Activated CD8-positive, alpha-beta T cell treated with anti-CD3 and anti-CD28 coated beads, Interleukin-2, amount 10 ng/mL, durations not matched to agents 7 days and 5 days (primary cell): ENCODE measurements at regions of chr20 and their contacts with region 1.

Region 1: DNA sequence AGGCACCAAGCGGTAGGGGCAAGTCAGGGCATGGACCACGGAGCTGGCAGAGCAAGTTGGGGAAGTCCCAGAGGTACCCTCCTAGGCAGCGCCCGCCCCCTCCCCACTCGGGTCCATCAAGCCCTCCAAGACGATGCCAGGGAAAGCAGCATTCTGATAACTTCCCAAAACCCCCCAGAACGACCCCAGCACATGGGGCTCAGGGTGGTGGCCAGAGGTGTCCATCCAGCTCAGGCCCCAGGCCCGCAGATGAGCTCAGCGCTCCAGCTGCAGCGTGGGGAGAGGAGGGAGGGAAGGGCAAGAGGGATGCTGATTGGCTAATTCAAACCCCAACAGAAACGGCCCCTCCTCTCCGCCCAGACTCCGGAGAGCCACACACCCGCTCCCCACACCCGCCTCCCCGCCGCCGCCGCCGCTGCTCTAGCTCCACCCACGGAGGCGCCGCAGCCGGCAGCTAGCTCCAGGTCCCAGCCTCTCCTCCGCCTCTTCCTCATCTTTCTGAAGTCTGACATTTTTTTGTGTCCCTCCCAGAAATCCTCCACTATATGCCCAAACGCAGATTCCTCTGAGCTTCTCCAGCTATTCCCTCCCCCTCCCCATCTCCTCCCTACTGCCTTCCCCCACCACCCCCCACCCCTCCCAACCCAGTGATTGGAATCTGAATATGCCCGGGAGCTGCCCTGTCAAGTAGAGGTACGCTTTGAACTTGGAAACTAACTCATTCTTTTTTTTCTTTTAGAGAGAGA is 40.3 kb upstream of the TLDC2 start:
- DNase-seq: peak; percentile 94
- ATAC-seq: peak; percentile 97
- H3K4me3 Mint-ChIP-seq: peak overlapping the region; percentile 84
- H3K27ac Mint-ChIP-seq: peak overlapping the region; percentile 91
- H3K4me1 Mint-ChIP-seq: peaks cover 39% of the 10 kb centered on the region
- H3K27me3 Mint-ChIP-seq: no peaks in the 10 kb centered on the region

Region 2: GRCh38 chr20:36717657-36718056 is 118.0 kb before region 1 on chr20:
- CTCF ChIA-PET with region 1: no interaction called
- POLR2A ChIA-PET with region 1: no interaction called
- DNase-seq: no peak
- ATAC-seq: no peak
- H3K4me3 Mint-ChIP-seq: no peak overlapping the region
- H3K27ac Mint-ChIP-seq: no peak overlapping the region
- H3K4me1 Mint-ChIP-seq: peaks cover 5% of the 10 kb centered on the region
- H3K27me3 Mint-ChIP-seq: no peaks in the 10 kb centered on the region

Region 3: DNA sequence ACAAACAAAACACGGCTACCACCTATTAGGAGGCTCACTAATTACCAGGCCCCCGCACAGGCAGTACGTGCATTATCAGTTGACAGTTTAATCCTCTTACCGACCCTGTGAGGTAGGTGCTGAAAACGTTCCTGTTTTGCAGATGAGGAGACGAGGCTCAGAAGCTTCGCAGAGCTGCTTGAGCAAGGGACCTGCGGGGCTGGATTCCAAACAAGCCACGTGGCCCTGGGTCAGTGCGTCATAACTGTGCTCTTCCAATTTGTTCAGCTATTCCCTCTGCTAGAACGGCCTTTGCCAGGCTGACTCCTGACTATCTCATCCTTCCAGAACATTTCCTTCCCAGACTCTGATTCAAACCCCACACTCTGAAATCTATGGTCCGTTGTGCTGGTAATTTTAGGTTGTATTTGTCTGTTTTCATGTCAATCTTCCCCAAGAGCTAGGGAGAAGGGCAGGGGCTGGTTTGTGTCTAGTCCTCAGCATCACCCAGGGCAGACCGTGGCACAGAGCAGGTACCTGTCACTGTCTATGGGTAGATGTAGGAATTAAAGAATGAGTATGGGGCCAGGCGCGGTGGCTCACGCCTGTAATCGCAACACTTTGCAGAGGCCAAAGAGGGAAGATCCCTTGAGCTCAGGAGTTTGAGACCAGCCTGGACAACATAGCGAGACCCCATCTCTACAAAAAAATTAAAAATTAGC is 11.5 kb after region 1 on chr20:
- CTCF ChIA-PET with region 1: interaction called, 21 read pairs
- POLR2A ChIA-PET with region 1: no interaction called
- DNase-seq: no peak
- ATAC-seq: no peak
- H3K4me3 Mint-ChIP-seq: no peak overlapping the region
- H3K27ac Mint-ChIP-seq: no peak overlapping the region
- H3K4me1 Mint-ChIP-seq: peaks cover 27% of the 10 kb centered on the region
- H3K27me3 Mint-ChIP-seq: no peaks in the 10 kb centered on the region

Region 4: DNA sequence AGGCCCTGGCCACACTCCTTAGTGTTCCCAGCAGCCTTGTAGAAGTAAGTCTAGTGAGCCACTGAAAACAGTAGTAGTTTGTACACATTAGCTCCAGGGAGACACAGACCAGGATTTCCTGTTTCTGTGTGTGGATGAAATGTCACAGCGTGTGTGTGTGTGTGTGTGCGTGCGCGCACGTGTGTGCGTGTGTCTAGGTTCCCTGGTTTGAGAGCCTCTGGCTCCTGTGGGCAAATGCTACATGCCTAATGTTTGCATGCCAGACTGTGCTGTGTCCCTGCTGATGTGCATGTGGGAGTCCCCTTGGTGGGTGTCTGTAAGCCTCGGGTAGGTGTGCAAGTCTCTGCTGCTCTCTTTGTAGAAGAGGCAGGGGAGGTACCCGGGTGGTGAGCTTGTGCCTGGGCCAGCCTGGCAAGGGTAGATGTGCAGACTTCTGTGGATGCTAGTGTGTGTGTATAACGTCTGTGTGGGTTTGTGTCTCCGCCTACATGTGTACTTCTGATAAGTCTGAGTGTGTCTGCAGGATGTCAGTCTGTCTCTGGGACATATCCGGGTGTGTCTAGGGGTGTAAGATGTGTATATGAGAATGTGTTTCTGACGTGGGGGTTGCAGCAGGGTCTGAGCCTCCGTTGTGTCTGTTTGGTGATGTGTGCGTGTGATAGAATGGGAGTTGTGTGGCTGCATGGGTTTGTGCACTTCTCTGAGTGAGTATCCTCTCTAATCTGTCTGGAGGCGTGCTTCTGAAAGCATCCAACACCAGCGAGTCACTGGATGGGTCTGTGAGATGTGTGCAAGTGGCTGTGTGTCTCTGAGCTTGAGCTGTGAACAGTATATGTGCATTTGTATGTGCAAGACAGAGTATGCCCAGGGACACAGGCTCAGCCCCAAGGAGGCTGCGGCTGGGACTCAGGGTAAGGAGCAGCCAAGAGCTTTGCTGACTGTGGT is 21.3 kb after region 1 on chr20:
- CTCF ChIA-PET with region 1: interaction called, 28 read pairs
- POLR2A ChIA-PET with region 1: interaction called, 13 read pairs
- DNase-seq: peak; percentile 73
- ATAC-seq: peak; percentile 71
- H3K4me3 Mint-ChIP-seq: no peak overlapping the region
- H3K27ac Mint-ChIP-seq: peak overlapping the region; percentile 4
- H3K4me1 Mint-ChIP-seq: peaks cover 17% of the 10 kb centered on the region
- H3K27me3 Mint-ChIP-seq: peaks cover 8% of the 10 kb centered on the region

Region 5: DNA sequence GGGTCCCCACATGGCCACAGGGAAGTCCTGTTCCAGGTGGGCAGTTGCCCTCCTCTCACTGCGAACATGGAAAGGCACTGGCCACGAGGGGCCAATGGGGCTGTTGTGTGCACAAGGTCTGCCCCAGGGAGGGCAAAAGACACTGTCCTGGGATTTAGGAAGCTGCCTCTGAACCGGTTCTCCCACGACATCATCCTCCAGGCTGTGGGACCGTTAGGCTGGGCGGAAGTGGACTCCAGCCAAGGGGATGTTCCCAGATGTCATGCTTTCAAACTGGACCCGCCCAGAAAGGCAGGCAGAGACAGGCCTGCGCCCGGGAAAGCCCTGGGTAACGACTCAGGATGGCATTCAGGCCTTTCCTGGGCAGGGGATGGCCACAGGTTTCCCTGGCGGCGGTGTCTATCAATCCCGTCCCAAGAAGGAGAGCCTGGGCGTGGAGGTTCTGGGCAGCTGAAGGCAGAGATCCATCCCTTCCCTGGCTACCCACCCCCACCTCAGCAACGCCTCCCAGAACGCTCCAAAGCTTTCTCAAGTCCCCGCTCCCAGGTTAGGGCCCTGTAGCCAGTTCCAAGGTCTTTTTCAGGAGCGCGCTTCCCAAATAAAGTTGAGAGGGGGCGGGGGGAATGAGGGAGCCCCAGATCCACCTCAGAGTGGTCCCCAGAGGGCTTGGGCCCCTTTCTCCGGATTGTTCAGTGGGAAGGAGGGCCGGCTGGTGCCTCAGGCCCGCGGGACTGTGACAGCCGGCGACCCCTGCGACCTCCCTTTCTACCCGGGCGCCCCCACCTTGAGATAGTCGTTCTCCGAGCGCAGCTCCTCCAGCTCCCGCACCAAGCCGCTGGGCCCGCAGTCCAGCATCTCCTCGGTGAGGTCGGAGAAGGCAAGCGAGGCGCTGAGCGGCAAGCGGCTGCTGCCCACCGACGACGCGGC is 26.5 kb after region 1 on chr20:
- CTCF ChIA-PET with region 1: interaction called, 30 read pairs
- POLR2A ChIA-PET with region 1: interaction called, 13 read pairs
- DNase-seq: no peak
- ATAC-seq: no peak
- H3K4me3 Mint-ChIP-seq: peak overlapping the region; percentile 49
- H3K27ac Mint-ChIP-seq: no peak overlapping the region
- H3K4me1 Mint-ChIP-seq: peaks cover 15% of the 10 kb centered on the region
- H3K27me3 Mint-ChIP-seq: peaks cover 24% of the 10 kb centered on the region

Region 6: GRCh38 chr20:36984257-36984638 is 148.6 kb after region 1 on chr20:
- CTCF ChIA-PET with region 1: no interaction called
- POLR2A ChIA-PET with region 1: no interaction called
- DNase-seq: no peak
- ATAC-seq: no peak
- H3K4me3 Mint-ChIP-seq: no peak overlapping the region
- H3K27ac Mint-ChIP-seq: no peak overlapping the region
- H3K4me1 Mint-ChIP-seq: peaks cover 16% of the 10 kb centered on the region
- H3K27me3 Mint-ChIP-seq: no peaks in the 10 kb centered on the region